ENCODE measurements at regions of chr9 and their contacts with region 1.

Region 1: DNA sequence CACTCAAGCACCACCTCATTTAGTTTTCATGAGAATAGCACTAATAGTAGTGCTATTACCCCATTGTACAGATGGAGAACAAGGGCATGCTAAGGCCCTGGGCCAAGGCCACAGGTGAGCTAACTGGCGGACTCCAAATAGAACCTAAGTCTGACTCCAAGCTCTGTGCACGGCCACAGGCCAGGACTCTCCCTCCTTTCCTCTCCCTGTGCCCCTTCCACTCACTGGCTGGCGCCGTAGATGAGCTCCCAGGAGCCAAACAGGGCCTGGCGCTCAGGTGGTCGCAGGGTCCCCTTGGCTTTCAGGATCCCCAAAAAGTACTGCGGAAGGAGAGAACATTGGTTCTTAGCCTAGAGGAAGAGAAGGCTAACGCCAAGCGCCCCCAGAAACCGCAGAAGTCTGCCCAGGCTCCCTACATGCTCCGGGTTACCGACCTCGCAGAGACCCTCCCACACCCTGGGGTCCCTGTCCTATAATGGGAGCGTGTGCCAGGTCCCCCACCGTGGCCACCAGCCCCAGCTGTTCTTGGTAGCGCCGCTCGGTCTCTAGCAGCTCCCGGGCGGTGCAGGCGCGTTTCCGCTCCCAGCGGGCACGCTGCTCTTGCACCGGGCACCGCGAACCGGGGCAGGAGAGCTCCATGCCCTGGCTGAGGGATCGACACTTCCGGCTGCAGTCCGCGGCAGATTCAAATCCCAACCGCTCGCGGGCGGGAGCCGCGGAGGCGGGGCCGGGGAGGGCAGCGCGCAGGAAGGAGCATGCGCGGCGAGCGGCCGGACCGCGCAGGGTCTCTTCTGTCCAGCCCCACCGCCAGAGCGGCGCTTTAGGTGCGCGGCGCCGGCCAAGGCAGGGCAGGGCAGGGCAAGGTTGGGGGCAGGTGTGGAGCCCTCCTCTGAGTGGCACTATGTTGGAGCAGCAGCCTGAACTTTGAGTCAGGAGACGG is at the start of gene ARHGEF39:
- DNase-seq: peak; percentile 84
- ATAC-seq: peak; percentile 84
- H3K4me3 Mint-ChIP-seq: peak within 1 kb of the TSS; percentile 86
- H3K27ac Mint-ChIP-seq: peak within 1 kb of the TSS; percentile 86
- H3K4me1 Mint-ChIP-seq: peaks cover 68% of the 10 kb centered on the region
- H3K27me3 Mint-ChIP-seq: no peaks in the 10 kb centered on the region
- total RNA-seq, gene ARHGEF39: 17.2 to 17.3 TPM

Region 2: GRCh38 chr9:35495984-35496383 is 168.8 kb before region 1 on chr9:
- CTCF ChIA-PET with region 1: no interaction called
- POLR2A ChIA-PET with region 1: no interaction called
- DNase-seq: peak; percentile 41
- ATAC-seq: peak; percentile 82
- H3K4me3 Mint-ChIP-seq: no peak overlapping the region
- H3K27ac Mint-ChIP-seq: no peak overlapping the region
- H3K4me1 Mint-ChIP-seq: peaks cover 27% of the 10 kb centered on the region
- H3K27me3 Mint-ChIP-seq: no peaks in the 10 kb centered on the region

Region 3: GRCh38 chr9:35675732-35676392 is 11.1 kb after region 1 on chr9:
- CTCF ChIA-PET with region 1: interaction called, 25 read pairs
- POLR2A ChIA-PET with region 1: interaction called, 3 read pairs
- DNase-seq: peak; percentile 38
- ATAC-seq: peak; percentile 62
- H3K4me3 Mint-ChIP-seq: peak overlapping the region; percentile 62
- H3K27ac Mint-ChIP-seq: no peak overlapping the region
- H3K4me1 Mint-ChIP-seq: peaks cover 15% of the 10 kb centered on the region
- H3K27me3 Mint-ChIP-seq: peaks cover 19% of the 10 kb centered on the region

Measured in activated CD8-positive, alpha-beta T cell treated with anti-CD3 and anti-CD28 coated beads, Interleukin-2, amount 10 ng/mL, durations not matched to agents 7 days and 5 days (primary cell).